Esophagus muscularis mucosa (tissue), 4 donors: ENCODE measurements at regions of chr9 and their contacts with region 1.

Region 1: GRCh38 chr9:37239224-37239859 is 119.0 kb downstream of the ZCCHC7 start:
- DNase-seq: no peak
- H3K4me3 ChIP-seq: no peak overlapping the region
- H3K27ac ChIP-seq: no peak overlapping the region
- H3K4me1 ChIP-seq: no peaks in the 10 kb centered on the region
- H3K27me3 ChIP-seq: no peaks in the 10 kb centered on the region
- CTCF ChIP-seq: no peak
- EP300 ChIP-seq: no peak
- POLR2A ChIP-seq: no peak

Region 2: GRCh38 chr9:37284636-37285035 is 45.3 kb after region 1 on chr9:
- intact Hi-C with region 1: loop called (anchors 5 kb)
- DNase-seq: no peak
- H3K4me3 ChIP-seq: no peak overlapping the region
- H3K27ac ChIP-seq: no peak overlapping the region
- H3K4me1 ChIP-seq: peaks cover 0 to 20% (median 16%) of the 10 kb centered on the region in 4 donors
- H3K27me3 ChIP-seq: no peaks in the 10 kb centered on the region
- CTCF ChIP-seq: no peak
- EP300 ChIP-seq: no peak
- POLR2A ChIP-seq: no peak